ENCODE measurements at regions of chr11 and their contacts with region 1.

Region 1: GRCh38 chr11:128290106-128290840 is 297.1 kb downstream of the ETS1 start:
- DNase-seq: peak; percentile 20 to 87 (median 76)
- ATAC-seq: peak; percentile 64 to 69
- H3K4me3 Mint-ChIP-seq: peak overlapping the region; percentile 86 to 95 (median 92)
- H3K27ac Mint-ChIP-seq: peak overlapping the region; percentile 98 to 100 (median 100)
- H3K4me1 Mint-ChIP-seq: peaks cover 41 to 97% (median 88%) of the 10 kb centered on the region in 4 donors
- H3K27me3 Mint-ChIP-seq: no peaks in the 10 kb centered on the region

Region 2: GRCh38 chr11:128125723-128126122 is 164.6 kb before region 1 on chr11:
- POLR2A ChIA-PET with region 1: no interaction called
- DNase-seq: no peak
- ATAC-seq: no peak
- H3K4me3 Mint-ChIP-seq: no peak overlapping the region
- H3K27ac Mint-ChIP-seq: peak overlapping the region in 1 of 10 donors; percentile 20
- H3K4me1 Mint-ChIP-seq: peaks cover 0 to 2% (median 0%) of the 10 kb centered on the region in 4 donors
- H3K27me3 Mint-ChIP-seq: no peaks in the 10 kb centered on the region

Region 3: DNA sequence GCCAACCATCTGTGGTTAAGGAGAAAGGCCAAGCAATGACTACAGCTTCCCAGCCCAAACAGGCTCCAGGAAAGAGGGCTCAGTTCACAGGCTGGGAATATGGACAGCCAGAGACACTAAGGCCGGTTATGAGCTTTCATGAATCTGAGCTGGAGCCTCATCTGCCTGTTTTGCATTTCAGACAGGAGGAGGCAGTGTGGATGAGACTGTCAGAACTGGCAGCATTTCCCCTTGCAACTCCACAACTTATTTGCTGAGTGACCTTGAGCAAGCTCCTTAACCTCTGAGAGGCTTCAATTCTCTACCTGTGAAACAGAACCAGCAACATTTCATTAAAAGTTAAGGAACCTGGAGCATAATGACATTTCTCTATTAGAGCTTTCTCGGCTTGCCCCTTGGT is 33.1 kb after region 1 on chr11:
- POLR2A ChIA-PET with region 1: interaction called, 44 read pairs
- DNase-seq: peak in 6 of 10 donors; percentile 17 to 69 (median 52)
- ATAC-seq: no peak
- H3K4me3 Mint-ChIP-seq: peak overlapping the region; percentile 6 to 83 (median 76)
- H3K27ac Mint-ChIP-seq: peak overlapping the region; percentile 93 to 99 (median 98)
- H3K4me1 Mint-ChIP-seq: peaks cover 52 to 92% (median 86%) of the 10 kb centered on the region in 4 donors
- H3K27me3 Mint-ChIP-seq: no peaks in the 10 kb centered on the region

Region 4: DNA sequence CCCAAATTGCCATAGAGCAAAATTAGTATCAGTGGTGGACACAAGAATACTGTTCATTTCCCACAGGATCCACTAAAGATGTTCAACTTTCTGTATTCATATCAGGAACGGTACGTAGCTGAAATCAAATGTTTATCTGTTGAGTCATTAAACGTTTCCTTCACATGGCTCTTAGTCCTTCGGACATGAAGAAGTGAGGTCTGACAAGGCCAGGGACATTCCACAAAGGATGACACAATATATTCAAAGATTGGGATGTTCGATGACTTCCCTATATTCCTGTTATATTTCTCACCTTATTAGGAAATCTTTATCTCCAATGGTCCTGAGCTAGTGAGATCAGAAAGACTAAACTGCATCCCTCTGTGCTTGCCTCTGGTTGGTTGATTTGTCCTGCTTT is 168.0 kb after region 1 on chr11:
- POLR2A ChIA-PET with region 1: interaction called, 36 read pairs
- DNase-seq: no peak
- ATAC-seq: no peak
- H3K4me3 Mint-ChIP-seq: peak overlapping the region in 1 of 10 donors; percentile 15
- H3K27ac Mint-ChIP-seq: peak overlapping the region in 9 of 10 donors; percentile 23 to 91 (median 82)
- H3K4me1 Mint-ChIP-seq: peaks cover 47 to 93% (median 83%) of the 10 kb centered on the region in 4 donors
- H3K27me3 Mint-ChIP-seq: no peaks in the 10 kb centered on the region

Region 5: GRCh38 chr11:128482512-128483191 is 192.4 kb after region 1 on chr11:
- POLR2A ChIA-PET with region 1: interaction called, 252 read pairs
- DNase-seq: peak in 8 of 10 donors; percentile 70 to 85 (median 78)
- ATAC-seq: peak; percentile 65 to 82
- H3K4me3 Mint-ChIP-seq: peak overlapping the region; percentile 73 to 89 (median 82)
- H3K27ac Mint-ChIP-seq: peak overlapping the region; percentile 93 to 99 (median 98)
- H3K4me1 Mint-ChIP-seq: peaks cover 53 to 95% (median 95%) of the 10 kb centered on the region in 4 donors
- H3K27me3 Mint-ChIP-seq: no peaks in the 10 kb centered on the region

Region 6: DNA sequence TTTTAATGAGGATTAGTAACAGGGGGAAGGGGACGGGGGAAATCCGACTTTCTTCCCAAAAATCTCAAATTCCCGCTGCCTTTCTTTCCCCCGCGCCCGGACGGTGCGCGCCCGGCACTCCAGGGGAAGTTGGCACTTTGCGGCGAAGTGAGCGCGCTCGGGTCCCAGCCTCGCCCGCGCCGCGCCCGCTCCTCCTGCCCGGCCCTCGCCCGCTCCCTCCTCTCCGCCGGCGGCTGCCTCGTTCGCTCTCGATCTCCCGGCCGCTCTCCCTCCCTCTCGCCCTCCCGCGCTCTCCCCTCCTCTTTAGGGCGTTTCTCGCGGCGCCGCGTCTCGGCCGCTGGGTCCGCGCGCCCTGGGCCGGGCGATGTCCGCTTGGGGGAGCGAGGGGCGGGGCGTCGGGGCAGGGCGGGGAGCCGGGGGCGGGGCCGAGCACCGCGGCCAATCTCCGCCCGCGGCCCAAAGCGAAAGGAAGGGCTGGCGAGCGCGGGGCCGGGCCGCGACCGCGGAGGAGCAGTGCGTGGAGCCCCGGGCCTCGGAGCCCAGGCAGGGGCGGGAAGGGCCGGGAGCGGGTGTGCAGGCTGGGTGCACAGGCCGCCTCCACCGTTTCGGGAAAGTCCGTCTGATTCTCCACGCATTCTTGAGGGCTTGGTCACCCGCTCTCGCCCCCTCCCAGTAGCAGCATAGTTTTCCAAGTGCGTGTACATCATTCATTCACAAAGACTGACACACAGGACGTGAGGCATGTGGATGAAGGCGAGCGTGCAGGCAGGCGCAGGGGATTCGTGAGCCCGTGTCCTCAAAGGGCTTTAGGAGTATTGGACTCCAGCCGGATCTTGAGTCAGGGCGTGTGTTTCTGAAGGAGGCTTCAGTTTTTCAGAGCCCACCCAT is 232.0 kb after region 1 on chr11:
- POLR2A ChIA-PET with region 1: interaction called, 77 read pairs
- DNase-seq: peak; percentile 69 to 91 (median 85)
- ATAC-seq: peak; percentile 59 to 65
- H3K4me3 Mint-ChIP-seq: peak overlapping the region; percentile 89 to 99 (median 98)
- H3K27ac Mint-ChIP-seq: peak overlapping the region; percentile 93 to 100 (median 96)
- H3K4me1 Mint-ChIP-seq: peaks cover 30 to 65% (median 50%) of the 10 kb centered on the region in 4 donors
- H3K27me3 Mint-ChIP-seq: no peaks in the 10 kb centered on the region